Cardiac septum (tissue), 1 donor: ENCODE measurements at regions of chr22 and their contacts with region 1.

Region 1: GRCh38 chr22:35995772-35996171 is 32.9 kb downstream of the RBFOX2 start:
- DNase-seq: peak; percentile 80

Region 2: DNA sequence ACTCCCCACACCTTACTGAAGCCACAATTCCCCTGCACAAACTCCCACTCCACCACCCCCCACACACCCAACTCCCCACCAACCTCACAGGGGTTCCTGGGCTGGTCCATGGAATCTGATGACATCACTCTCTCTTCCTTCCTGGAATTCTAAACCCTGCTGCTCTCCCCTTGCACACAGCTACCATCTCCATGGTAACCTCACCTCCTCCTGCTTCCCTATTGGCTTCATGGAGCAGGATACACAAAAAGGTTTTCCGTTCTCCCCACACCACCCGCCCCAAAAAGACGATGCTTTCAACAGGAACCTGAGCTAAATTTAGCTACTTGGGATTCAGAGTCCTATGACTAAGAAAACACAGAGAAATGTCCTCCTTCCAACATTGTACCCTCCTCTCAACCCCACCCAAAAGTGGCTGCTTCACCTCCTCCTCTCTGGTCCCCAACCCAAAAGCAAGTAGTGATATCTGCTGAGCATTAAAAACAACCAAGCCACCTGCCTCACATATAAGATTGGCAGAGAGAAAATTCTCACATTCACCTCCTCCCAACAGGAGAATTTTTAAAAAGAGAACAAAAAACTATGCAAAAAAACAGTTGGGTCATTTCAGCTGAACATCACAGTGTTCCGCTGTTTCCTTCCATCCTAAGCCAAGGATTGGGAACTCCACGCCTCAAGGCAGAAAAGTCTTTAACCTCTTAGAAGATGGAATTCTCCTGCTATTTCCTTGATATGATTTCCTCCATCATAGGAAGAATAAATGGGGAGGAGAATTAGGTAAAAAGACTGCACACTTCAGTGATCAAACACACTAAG is 34.1 kb before region 1 on chr22:
- intact Hi-C with region 1: loop called (anchors 5 kb)
- DNase-seq: peak; percentile 71

Region 3: GRCh38 chr22:36010882-36011281 is 15.1 kb after region 1 on chr22:
- intact Hi-C with region 1: no loop called
- DNase-seq: no peak

Region 4: GRCh38 chr22:36252754-36253517 is 257.2 kb after region 1 on chr22 and contains the start of gene APOL1:
- intact Hi-C with region 1: no loop called
- DNase-seq: peak; percentile 85
- total RNA-seq, gene APOL1: 25.6 TPM